OCI-LY7 (cell line): ENCODE measurements at regions of chr4 and their contacts with region 1.

Region 1: GRCh38 chr4:40056716-40057585 is at the start of gene N4BP2:
- DNase-seq: peak; percentile 92
- H3K4me3 ChIP-seq: peak within 1 kb of the TSS; percentile 79
- H3K27ac ChIP-seq: peak within 1 kb of the TSS; percentile 79
- H3K4me1 ChIP-seq: peaks cover 38% of the 10 kb centered on the region
- CTCF ChIP-seq: peak; percentile 76
- total RNA-seq, gene N4BP2: 11.4 and 12.5 TPM in 2 replicates

Region 2: GRCh38 chr4:39977489-39978377 is 79.2 kb before region 1 on chr4 and contains the start of gene PDS5A:
- CTCF ChIA-PET with region 1: no interaction called
- POLR2A ChIA-PET with region 1: interaction called, 3 read pairs
- intact Hi-C with region 1: loop called (anchors 1 kb)
- DNase-seq: peak; percentile 96
- H3K4me3 ChIP-seq: peak within 1 kb of the TSS; percentile 86
- H3K27ac ChIP-seq: peak within 1 kb of the TSS; percentile 86
- H3K4me1 ChIP-seq: peaks cover 25% of the 10 kb centered on the region
- CTCF ChIP-seq: peak; percentile 80
- total RNA-seq, gene PDS5A: 65.3 and 69.5 TPM in 2 replicates

Region 3: DNA sequence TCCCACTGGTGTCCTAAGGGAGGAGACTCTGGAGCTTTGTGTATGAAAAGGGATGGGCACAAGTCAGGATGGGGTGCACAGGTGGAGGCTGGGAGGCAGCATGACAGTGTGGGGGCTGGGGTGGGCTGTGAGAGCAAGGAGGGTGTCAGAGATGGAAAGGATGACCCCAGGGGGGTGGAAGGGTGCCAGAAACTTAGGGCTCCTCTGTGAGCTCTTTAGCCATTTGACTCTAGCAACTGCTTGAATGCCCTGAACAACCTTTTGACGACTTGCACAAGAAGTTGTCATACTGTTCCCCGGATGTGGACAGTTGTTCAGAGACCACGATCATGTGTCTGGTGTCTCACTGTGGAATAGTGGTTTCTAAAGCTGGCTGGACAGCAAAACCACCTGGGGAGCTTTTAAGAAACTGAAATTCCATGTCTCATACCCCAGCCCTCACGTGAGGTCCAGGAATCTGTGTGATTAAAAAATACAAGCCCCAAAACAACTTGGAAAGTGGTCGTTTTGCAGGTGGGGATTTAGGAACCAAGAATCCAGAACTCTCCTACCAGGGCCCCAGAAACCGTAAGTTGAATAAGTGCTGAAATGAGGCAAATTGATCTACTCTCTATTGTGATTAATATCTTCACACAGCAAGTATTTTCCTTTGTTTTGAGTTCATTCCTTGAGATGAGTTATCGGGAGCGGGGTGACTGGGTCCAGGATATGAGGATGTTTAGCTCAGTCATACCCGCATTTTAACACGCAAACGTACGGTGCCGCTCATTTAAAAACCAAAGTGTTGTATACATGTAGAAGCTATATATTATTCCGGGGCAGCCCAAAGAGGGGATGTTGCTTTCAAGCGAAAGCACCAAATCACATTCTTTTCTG is 143.3 kb after region 1 on chr4:
- CTCF ChIA-PET with region 1: no interaction called
- POLR2A ChIA-PET with region 1: interaction called, 4 read pairs
- intact Hi-C with region 1: loop called (anchors 2 kb)
- DNase-seq: peak; percentile 83
- H3K4me3 ChIP-seq: peak overlapping the region; percentile 79
- H3K27ac ChIP-seq: peak overlapping the region; percentile 93
- H3K4me1 ChIP-seq: peaks cover 51% of the 10 kb centered on the region
- CTCF ChIP-seq: no peak

Region 4: GRCh38 chr4:40325189-40326019 is 268.5 kb after region 1 on chr4:
- CTCF ChIA-PET with region 1: interaction called, 5 read pairs
- POLR2A ChIA-PET with region 1: interaction called, 4 read pairs
- intact Hi-C with region 1: loop called (anchors 1 kb)
- DNase-seq: peak; percentile 85
- H3K4me3 ChIP-seq: no peak overlapping the region
- H3K27ac ChIP-seq: no peak overlapping the region
- H3K4me1 ChIP-seq: peaks cover 4% of the 10 kb centered on the region
- CTCF ChIP-seq: peak; percentile 99

Region 5: DNA sequence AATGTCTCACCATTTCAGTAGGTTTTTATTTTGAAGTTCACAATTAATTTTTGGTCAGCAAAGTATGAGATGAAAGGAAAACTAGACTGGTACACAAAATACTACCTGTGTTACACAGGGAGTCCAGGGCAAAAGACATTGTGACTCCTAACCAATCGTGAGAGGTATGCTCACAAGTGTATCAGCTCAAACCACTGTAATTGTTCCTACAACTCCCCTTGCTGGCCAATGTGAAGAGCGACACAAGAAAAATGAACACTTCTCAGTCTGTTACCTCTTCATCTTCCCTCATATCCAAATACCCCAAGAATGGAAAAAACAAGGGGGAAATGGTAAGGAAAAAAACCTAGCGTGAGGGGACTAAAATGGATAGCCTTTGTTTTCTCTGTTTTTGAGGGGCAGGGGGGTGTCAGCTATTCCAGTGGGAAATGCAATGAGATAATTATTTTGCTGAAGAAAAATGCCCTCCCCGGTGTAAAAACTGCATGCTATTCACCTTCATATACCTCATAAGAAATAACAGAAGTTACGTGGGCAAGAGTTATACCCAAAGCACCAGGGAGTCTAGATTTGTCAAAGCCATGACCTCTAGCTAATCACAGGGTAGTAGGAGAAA is 662.2 kb after region 1 on chr4:
- CTCF ChIA-PET with region 1: no interaction called
- POLR2A ChIA-PET with region 1: no interaction called
- intact Hi-C with region 1: loop called (anchors 5 kb)
- DNase-seq: peak; percentile 71
- H3K4me3 ChIP-seq: no peak overlapping the region
- H3K27ac ChIP-seq: no peak overlapping the region
- H3K4me1 ChIP-seq: peaks cover 8% of the 10 kb centered on the region
- CTCF ChIP-seq: peak; percentile 84